ENCODE measurements at regions of chr16 and their contacts with region 1.

Region 1: GRCh38 chr16:28924732-28925385 is at the start of gene RABEP2:
- DNase-seq: peak; percentile 95 to 98
- ATAC-seq: peak; percentile 98
- H3K4me3 ChIP-seq: peak within 1 kb of the TSS; percentile 88 to 94
- H3K27ac ChIP-seq: peak within 1 kb of the TSS; percentile 78 to 97
- H3K4me1 ChIP-seq: no peaks in the 10 kb centered on the region
- H3K27me3 ChIP-seq: no peaks in the 10 kb centered on the region
- total RNA-seq, gene RABEP2: 11.5 to 18.8 TPM

Region 2: DNA sequence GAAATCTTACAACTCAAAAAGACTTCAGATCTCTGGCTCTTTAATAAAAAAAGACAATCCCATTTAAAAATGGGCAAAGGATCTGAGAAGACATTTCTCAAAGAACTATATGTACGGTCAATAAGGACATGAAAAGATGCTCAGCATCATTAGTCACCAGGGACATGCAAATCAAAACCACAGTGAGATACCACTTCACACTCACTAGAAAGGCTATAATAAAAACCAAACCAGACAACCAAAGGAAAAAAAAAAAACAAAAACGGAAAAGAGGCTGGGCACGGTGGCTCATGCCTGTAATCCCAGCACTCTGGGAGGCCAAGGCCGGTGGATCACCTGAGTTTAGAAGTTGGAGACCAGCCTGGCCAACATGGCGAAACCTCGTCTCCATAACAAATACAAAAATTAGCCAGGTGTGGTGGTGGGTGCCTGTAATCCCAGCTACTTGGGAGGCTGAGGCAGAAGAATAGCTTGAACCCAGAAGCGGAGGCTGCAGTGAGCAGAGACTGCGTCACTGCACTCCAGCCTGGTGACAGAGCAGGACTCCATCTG is 451.1 kb before region 1 on chr16:
- intact Hi-C with region 1: no loop called
- DNase-seq: peak in 1 of 2 donors; percentile 15
- ATAC-seq: no peak
- H3K4me3 ChIP-seq: no peak overlapping the region
- H3K27ac ChIP-seq: no peak overlapping the region
- H3K4me1 ChIP-seq: no peaks in the 10 kb centered on the region
- H3K27me3 ChIP-seq: no peaks in the 10 kb centered on the region

Region 3: GRCh38 chr16:28617874-28618273 is 307.0 kb before region 1 on chr16:
- intact Hi-C with region 1: no loop called
- DNase-seq: no peak
- ATAC-seq: no peak
- H3K4me3 ChIP-seq: no peak overlapping the region
- H3K27ac ChIP-seq: no peak overlapping the region
- H3K4me1 ChIP-seq: no peaks in the 10 kb centered on the region
- H3K27me3 ChIP-seq: no peaks in the 10 kb centered on the region

Region 4: GRCh38 chr16:28879841-28880588 is 44.8 kb before region 1 on chr16:
- intact Hi-C with region 1: loop called in 1 of 2 experiments (anchors 1 kb)
- DNase-seq: peak; percentile 91 to 97
- ATAC-seq: peak; percentile 91
- H3K4me3 ChIP-seq: peak overlapping the region; percentile 12 to 49
- H3K27ac ChIP-seq: no peak overlapping the region
- H3K4me1 ChIP-seq: no peaks in the 10 kb centered on the region
- H3K27me3 ChIP-seq: no peaks in the 10 kb centered on the region